Activated CD4-positive, alpha-beta T cell treated with anti-CD3 and anti-CD28 coated beads, Interleukin-2, amount 10 ng/mL, durations not matched to agents 7 days and 5 days (primary cell): ENCODE measurements at regions of chr5 and their contacts with region 1.

Region 1: DNA sequence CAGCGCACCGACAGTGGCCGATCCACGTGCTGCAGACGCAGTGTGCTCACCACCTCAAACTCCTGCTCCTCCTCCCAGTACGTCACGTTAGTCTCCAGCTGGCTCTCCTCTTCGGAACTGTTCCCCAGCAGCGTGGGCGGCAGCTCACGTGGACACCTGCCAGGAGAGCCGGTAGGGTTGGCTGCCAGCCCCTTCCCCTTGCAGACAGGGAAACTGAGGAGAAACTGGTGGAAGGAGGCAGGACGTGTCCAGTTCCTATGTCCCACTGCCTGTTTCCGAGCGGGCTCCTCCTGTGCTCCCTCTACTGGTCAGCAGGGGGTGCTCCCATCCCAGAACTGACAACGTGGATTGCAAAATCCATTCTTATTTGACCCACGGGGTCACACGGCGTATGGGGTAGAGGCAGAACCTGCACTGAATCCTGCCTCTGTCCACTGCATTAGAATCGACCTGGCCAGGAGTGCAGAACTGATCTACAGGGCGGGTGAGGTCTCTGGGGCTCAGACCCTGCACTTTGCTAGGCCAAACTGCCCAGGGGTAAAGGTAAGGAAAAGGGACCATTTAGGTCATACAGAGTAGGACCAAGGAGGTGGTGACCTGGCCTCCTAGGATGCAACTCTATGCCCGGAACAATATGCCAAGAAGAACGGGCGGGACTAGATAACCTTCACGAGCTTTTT is 25.7 kb downstream of the PDGFRB start:
- DNase-seq: peak; percentile 65
- H3K4me3 Mint-ChIP-seq: no peak overlapping the region
- H3K27ac Mint-ChIP-seq: no peak overlapping the region
- H3K4me1 Mint-ChIP-seq: no peaks in the 10 kb centered on the region
- H3K27me3 Mint-ChIP-seq: no peaks in the 10 kb centered on the region

Region 2: GRCh38 chr5:150217873-150218692 is 88.1 kb after region 1 on chr5:
- CTCF ChIA-PET with region 1: interaction called, 10 read pairs
- POLR2A ChIA-PET with region 1: no interaction called
- DNase-seq: peak; percentile 87
- H3K4me3 Mint-ChIP-seq: no peak overlapping the region
- H3K27ac Mint-ChIP-seq: no peak overlapping the region
- H3K4me1 Mint-ChIP-seq: peaks cover 2% of the 10 kb centered on the region
- H3K27me3 Mint-ChIP-seq: peaks cover 7% of the 10 kb centered on the region